ENCODE measurements at regions of chr22 and their contacts with region 1.

Region 1: DNA sequence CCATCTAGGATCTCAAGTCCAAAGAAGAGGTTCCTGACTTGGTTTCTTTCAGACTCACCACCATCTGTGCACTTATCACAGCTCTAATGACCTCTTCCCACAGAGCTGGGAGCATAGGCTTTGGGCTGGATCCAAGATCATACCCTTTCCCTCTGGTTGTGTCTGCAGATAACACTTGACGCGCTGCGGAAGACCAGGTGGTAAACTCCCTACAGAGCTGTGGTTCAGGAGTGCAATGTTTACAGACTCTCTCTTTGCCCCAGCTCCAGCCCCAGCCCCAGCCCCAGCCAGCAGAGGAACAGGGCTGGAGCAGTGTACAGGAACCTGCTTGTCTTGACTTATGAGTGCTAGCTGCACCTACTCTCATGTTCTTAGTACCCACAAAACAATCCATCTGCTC is 274.4 kb upstream of the SYN3 start:
- DNase-seq: no peak
- H3K4me3 ChIP-seq: no peak overlapping the region
- H3K27ac ChIP-seq: no peak overlapping the region
- H3K4me1 ChIP-seq: no peaks in the 10 kb centered on the region
- H3K27me3 ChIP-seq: no peaks in the 10 kb centered on the region
- CTCF ChIP-seq: no peak
- POLR2A ChIP-seq: no peak

Region 2: DNA sequence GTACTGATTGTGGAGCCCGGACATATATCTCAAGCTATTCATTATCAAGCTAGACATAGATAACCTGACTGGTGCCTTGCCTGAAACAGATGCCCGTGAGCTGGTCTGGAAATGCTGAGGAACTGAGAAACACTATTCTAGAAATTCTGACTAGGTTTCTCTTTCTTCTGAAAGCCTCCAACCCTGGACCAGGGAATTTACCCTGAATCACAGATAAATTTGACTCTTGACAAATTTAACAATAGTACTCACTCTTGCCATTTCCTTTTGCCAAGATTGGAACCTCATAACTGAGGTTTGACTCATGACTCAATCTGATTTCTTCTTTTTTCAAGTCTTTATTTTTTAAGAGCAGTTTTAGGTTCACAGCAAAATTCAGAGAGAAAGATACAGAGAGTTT is 84.8 kb before region 1 on chr22:
- intact Hi-C with region 1: no loop called
- DNase-seq: no peak
- H3K4me3 ChIP-seq: no peak overlapping the region
- H3K27ac ChIP-seq: no peak overlapping the region
- H3K4me1 ChIP-seq: peaks cover 0 to 6% of the 10 kb centered on the region in 2 donors
- H3K27me3 ChIP-seq: no peaks in the 10 kb centered on the region
- CTCF ChIP-seq: no peak
- POLR2A ChIP-seq: no peak

Region 3: DNA sequence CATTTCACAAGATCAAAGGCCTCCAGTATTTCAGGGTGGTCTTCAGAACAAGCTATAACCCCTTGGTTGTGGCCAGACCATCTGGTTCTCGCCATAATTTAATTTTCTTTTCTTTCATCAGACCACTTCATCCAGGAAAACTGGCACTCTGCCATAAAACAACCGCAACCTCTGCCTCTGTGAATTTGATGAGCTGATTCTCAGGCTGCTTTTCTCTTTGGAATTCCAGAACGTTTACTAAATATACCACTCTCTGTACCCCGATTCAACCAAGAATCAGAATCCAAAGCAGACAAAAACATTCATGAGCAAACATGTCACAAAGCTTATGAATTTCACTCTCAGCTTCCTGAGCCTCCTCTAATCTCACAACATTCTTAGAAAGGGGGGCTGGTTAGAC is 57.4 kb after region 1 on chr22:
- intact Hi-C with region 1: loop called in 1 of 2 experiments (anchors 10 kb)
- DNase-seq: no peak
- H3K4me3 ChIP-seq: no peak overlapping the region
- H3K27ac ChIP-seq: no peak overlapping the region
- H3K4me1 ChIP-seq: no peaks in the 10 kb centered on the region
- H3K27me3 ChIP-seq: no peaks in the 10 kb centered on the region
- CTCF ChIP-seq: no peak
- POLR2A ChIP-seq: no peak

Region 4: DNA sequence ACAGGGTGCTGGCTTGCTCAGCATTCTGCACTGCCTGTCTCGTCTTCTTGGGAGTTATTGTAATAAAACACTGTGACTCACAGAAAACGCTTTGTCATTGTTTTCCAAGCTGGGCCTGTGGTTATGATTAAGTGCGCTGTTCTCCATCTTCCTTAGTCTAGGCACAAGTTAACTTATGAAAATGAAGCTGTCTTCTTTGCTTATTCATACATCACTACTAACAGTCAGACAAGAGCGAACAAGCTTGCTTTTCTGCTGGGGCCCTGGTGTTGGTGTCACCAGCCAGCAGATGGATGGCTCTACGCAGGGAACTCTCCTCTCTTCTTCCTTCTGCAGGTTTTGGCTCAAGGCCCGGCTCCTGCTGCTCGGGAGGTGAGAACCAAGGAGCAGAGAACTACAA is 105.7 kb after region 1 on chr22:
- intact Hi-C with region 1: no loop called
- DNase-seq: peak in 1 of 7 donors; percentile 10
- H3K4me3 ChIP-seq: no peak overlapping the region
- H3K27ac ChIP-seq: no peak overlapping the region
- H3K4me1 ChIP-seq: no peaks in the 10 kb centered on the region
- H3K27me3 ChIP-seq: no peaks in the 10 kb centered on the region
- CTCF ChIP-seq: no peak
- POLR2A ChIP-seq: no peak

Measured in adrenal gland (tissue), 19 donors.